H1 (cell line): ENCODE measurements at regions of chr6 and their contacts with region 1.

Region 1: GRCh38 chr6:3848925-3849605 is at the start of gene FAM50B:
- DNase-seq: peak; percentile 64 to 99
- H3K4me3 ChIP-seq: peak within 1 kb of the TSS; percentile 46 to 71 (median 60)
- H3K27ac ChIP-seq: no peak within 1 kb of the TSS
- H3K4me1 ChIP-seq: peaks cover 0 to 10% (median 4%) of the 10 kb centered on the region in 4 experiments; a peak in 5 of 7 replicates
- H3K27me3 ChIP-seq: 0 out of 7 replicates have a peak, but pooled peaks cover 0 to 2% (median 0%) of the 10 kb centered on the region in 4 experiments
- CTCF ChIP-seq: peak; percentile 91 to 99 (median 95)
- EP300 ChIP-seq: no peak
- POLR2A ChIP-seq: peak in 1 of 2 experiments; percentile 50; a peak in 1 of 3 replicates
- RAD21 ChIP-seq: peak; percentile 85 to 89
- total RNA-seq, gene FAM50B: 3.1 and 3.8 TPM in 2 replicates

Region 2: DNA sequence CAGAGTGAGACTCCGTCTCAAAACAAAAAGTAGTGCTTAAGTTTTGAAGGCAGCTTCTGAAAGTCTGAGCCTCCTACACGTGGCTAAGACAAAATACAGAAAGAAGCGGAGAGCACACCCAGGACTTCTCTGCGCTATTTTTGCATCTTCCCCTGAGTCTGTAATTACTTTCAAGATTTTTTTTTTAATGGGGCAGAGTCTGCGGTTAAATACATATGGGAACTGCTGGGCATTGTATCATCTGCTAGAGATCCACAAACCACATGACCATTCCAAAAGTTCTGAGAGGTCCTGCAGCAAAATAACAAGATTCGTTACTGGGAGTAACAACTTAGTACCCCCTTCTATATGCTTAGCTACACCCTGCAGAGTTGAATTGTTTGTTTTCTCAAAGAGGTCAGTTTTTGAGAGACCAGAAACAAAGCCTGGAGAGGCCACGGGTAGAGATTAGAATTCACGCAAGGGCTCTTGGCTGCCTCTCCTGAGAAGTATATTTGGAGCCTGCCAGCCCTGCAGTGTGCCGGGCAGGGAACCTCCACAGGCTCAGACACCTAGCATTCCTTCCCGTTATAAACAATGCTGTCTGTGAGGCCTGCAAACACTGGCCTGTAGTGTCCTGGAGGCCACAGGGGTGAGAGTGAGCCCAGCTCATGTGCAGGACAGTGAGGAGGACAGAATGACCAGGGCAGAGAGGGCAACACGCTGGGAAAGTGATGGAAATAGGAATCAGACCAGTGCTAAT is 48.0 kb before region 1 on chr6:
- CTCF ChIA-PET with region 1: interaction called, 13 read pairs
- POLR2A ChIA-PET with region 1: no interaction called
- DNase-seq: no peak
- H3K4me3 ChIP-seq: no peak overlapping the region
- H3K27ac ChIP-seq: no peak overlapping the region
- H3K4me1 ChIP-seq: peaks cover 0 to 4% (median 3%) of the 10 kb centered on the region in 4 experiments; a peak in 5 of 7 replicates
- H3K27me3 ChIP-seq: no peaks in the 10 kb centered on the region; a peak in 3 of 7 replicates
- CTCF ChIP-seq: no peak
- EP300 ChIP-seq: no peak
- POLR2A ChIP-seq: no peak
- RAD21 ChIP-seq: no peak

Region 3: GRCh38 chr6:3861424-3861823 is 12.4 kb after region 1 on chr6:
- CTCF ChIA-PET with region 1: interaction called, 73 read pairs
- POLR2A ChIA-PET with region 1: no interaction called
- DNase-seq: no peak
- H3K4me3 ChIP-seq: no peak overlapping the region
- H3K27ac ChIP-seq: no peak overlapping the region
- H3K4me1 ChIP-seq: peaks cover 0 to 4% (median 0%) of the 10 kb centered on the region in 4 experiments; a peak in 2 of 7 replicates
- H3K27me3 ChIP-seq: no peaks in the 10 kb centered on the region
- CTCF ChIP-seq: no peak
- EP300 ChIP-seq: no peak
- POLR2A ChIP-seq: no peak
- RAD21 ChIP-seq: no peak

Region 4: DNA sequence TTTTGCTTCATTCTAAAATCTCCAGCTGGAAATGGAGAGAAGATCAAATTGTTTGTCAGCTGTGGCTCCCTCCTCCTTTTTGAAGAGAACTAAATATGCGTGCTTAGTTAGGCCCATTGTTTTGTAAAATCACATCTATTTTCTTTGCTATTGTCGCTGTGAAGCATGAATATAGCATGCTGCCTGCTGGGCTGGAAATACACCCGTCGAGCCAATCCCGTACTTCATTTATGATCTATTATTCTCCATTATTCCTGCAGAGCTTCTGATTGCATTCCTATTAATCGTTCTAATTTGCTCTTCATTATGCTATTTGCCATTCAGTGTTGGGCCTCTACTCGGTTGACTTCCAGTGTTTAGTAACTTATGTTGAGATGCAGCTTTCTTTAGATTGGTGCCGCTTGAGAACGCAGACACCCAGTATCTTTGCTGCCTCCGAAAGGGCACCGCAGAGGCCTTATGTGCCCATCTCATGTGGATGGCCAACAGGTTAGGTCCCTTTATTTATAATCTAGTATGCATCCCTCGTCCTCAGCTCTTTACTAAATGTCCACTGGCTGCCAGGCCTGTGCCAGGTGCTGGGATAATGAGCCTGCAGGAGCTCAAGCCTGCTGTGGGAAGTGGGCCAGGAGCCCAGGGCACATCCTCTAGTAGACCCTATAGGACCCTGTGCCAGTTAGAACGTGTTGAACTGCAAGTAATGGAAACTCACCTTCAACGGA is 45.7 kb after region 1 on chr6:
- CTCF ChIA-PET with region 1: interaction called, 39 read pairs
- POLR2A ChIA-PET with region 1: no interaction called
- DNase-seq: no peak
- H3K4me3 ChIP-seq: peak overlapping the region in 1 of 4 experiments; percentile 19; a peak in 1 of 8 replicates
- H3K27ac ChIP-seq: no peak overlapping the region
- H3K4me1 ChIP-seq: peaks cover 6 to 16% (median 10%) of the 10 kb centered on the region in 4 experiments; a peak in 6 of 7 replicates
- H3K27me3 ChIP-seq: no peaks in the 10 kb centered on the region; a peak in 2 of 7 replicates
- CTCF ChIP-seq: no peak
- EP300 ChIP-seq: no peak
- POLR2A ChIP-seq: no peak
- RAD21 ChIP-seq: no peak

Region 5: DNA sequence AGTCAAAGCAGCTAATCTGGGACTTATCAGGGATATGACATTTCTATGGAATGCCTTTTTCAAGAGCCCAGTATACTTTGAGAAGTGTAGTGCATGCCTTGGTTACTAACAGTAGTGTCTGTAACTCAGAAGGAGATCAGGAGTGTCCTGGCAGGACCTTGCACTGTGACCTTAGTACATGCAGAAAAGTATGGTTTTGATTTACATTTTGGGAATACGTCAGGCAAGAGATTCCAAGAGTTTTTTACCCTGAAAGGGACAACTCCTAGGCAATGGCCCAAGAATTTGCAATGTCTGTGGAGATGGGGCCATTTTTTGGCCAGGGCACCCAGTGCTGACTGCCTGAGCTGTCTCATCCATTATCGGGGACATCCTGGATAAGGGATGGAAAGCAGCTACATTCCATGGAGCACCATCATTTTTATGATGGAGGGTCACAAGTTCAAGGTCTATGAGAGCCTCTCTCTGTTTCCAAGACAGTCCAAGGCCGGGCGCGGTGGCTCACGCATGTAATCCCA is 80.3 kb after region 1 on chr6:
- CTCF ChIA-PET with region 1: interaction called, 124 read pairs
- POLR2A ChIA-PET with region 1: interaction called, 3 read pairs
- DNase-seq: no peak
- H3K4me3 ChIP-seq: no peak overlapping the region
- H3K27ac ChIP-seq: no peak overlapping the region
- H3K4me1 ChIP-seq: no peaks in the 10 kb centered on the region
- H3K27me3 ChIP-seq: no peaks in the 10 kb centered on the region
- CTCF ChIP-seq: no peak
- EP300 ChIP-seq: no peak
- POLR2A ChIP-seq: no peak
- RAD21 ChIP-seq: no peak

Region 6: GRCh38 chr6:3977875-3978711 is 129.0 kb after region 1 on chr6:
- CTCF ChIA-PET with region 1: interaction called, 68 read pairs
- POLR2A ChIA-PET with region 1: interaction called, 3 read pairs
- DNase-seq: no peak
- H3K4me3 ChIP-seq: no peak overlapping the region
- H3K27ac ChIP-seq: no peak overlapping the region
- H3K4me1 ChIP-seq: peaks cover 0 to 1% (median 0%) of the 10 kb centered on the region in 4 experiments; a peak in 1 of 7 replicates
- H3K27me3 ChIP-seq: no peaks in the 10 kb centered on the region
- CTCF ChIP-seq: peak; percentile 25 to 65 (median 51)
- EP300 ChIP-seq: no peak
- POLR2A ChIP-seq: no peak
- RAD21 ChIP-seq: peak; percentile 60 to 63

Region 7: DNA sequence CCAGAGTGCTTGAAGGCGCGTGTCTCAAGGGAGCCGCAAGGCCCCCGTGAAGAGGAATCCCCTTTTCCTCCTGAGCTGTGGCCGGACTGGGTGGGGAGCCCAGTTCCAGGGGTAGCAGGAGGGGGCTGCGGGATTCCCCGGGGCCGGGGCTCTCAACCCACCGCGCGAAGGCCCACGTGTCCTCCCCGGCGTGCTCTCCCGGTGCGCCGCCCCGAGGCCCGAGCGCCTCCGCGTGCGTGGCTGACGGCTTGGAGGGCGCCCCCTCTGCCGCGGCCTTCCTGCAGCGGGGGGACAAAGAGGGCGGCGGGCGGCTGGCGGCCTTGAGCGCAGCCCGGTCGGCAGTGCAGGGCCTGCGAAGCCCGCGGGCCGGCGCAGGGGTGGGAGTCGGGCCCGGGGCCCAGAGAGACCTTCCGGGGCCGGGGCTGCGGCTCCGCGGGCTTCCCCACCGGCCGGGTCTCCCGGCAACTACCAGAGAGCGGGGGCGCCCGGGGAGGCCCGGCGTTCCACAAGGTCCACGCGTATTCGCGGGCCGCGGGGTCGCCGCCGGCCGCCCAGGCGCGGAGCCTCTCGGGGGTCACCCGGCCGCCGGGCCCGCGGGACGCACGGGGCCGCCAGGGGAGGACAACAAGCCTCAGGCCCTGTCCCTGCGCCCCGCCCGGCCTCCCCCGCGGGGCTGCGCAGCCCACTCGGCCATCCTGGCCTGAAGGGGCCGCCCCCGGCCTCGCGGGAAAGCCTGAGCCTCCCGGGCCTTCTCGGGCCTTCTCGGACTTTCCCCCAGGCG is 229.8 kb after region 1 on chr6 and contains the start of gene FAM217A:
- CTCF ChIA-PET with region 1: no interaction called
- POLR2A ChIA-PET with region 1: no interaction called
- DNase-seq: peak; percentile 7 to 67
- H3K4me3 ChIP-seq: peak within 1 kb of the TSS in 1 of 4 experiments; percentile 38; a peak in 1 of 8 replicates
- H3K27ac ChIP-seq: no peak within 1 kb of the TSS
- H3K4me1 ChIP-seq: peaks cover 0 to 7% (median 4%) of the 10 kb centered on the region in 4 experiments; a peak in 3 of 7 replicates
- H3K27me3 ChIP-seq: peaks cover 0 to 3% (median 0%) of the 10 kb centered on the region in 4 experiments; a peak in 1 of 7 replicates
- CTCF ChIP-seq: no peak
- EP300 ChIP-seq: no peak
- POLR2A ChIP-seq: no peak
- RAD21 ChIP-seq: no peak
- total RNA-seq, gene FAM217A: not detected in 2 replicates